Psoas muscle (tissue), 8 donors: ENCODE measurements at regions of chr14 and their contacts with region 1.

Region 1: DNA sequence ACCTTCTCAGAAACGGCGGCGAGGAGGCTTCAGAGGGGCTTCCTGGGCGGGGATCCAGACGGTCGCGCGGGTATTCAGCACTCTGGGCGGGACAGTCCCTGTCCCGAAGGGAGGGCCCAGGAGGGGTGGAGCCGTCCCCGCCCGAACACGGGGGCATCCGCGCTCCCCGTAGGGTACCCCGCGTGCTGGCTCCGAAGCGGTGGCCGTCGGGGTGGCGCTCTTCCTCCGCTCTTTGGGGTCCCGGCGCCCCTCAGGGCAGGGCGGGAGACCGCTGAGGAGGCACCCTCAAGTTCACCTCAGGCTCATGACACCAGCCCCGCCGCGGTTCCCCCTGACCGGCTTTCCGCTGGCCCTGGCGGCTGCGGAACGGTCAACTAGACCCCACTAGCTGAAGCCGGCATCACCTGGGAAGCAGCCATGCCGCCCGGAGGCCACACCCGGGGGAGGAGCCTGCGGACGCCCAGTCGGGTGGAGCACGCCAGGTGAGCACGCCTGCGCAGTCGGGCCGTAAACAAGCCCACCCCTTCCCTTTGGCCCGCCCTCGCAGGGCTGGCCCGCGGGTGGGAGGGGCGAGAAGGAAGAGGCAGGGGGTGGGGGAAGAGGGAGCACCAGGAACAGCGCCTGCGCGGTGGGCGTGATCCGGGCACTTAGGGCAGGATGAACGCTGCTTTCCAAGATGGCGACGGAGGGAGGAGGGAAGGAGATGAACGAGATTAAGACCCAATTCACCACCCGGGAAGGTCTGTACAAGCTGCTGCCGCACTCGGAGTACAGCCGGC is at the start of gene WDR20:
- DNase-seq: peak; percentile 98 to 99
- ATAC-seq: peak; percentile 99 to 100 (median 99)
- H3K4me3 ChIP-seq: peak within 1 kb of the TSS; percentile 86
- H3K27ac ChIP-seq: peak within 1 kb of the TSS; percentile 87
- H3K4me1 ChIP-seq: peaks cover 13% of the 10 kb centered on the region
- H3K27me3 ChIP-seq: no peaks in the 10 kb centered on the region
- CTCF ChIP-seq: no peak
- total RNA-seq, gene WDR20: 18.3 to 26.8 (median 22.3) TPM

Region 2: GRCh38 chr14:101903111-101903561 is 236.3 kb before region 1 on chr14:
- intact Hi-C with region 1: no loop called
- DNase-seq: peak; percentile 53 to 88
- ATAC-seq: peak; percentile 93 to 99 (median 98)
- H3K4me3 ChIP-seq: peak overlapping the region; percentile 29
- H3K27ac ChIP-seq: peak overlapping the region; percentile 58
- H3K4me1 ChIP-seq: peaks cover 10% of the 10 kb centered on the region
- H3K27me3 ChIP-seq: no peaks in the 10 kb centered on the region
- CTCF ChIP-seq: no peak

Region 3: DNA sequence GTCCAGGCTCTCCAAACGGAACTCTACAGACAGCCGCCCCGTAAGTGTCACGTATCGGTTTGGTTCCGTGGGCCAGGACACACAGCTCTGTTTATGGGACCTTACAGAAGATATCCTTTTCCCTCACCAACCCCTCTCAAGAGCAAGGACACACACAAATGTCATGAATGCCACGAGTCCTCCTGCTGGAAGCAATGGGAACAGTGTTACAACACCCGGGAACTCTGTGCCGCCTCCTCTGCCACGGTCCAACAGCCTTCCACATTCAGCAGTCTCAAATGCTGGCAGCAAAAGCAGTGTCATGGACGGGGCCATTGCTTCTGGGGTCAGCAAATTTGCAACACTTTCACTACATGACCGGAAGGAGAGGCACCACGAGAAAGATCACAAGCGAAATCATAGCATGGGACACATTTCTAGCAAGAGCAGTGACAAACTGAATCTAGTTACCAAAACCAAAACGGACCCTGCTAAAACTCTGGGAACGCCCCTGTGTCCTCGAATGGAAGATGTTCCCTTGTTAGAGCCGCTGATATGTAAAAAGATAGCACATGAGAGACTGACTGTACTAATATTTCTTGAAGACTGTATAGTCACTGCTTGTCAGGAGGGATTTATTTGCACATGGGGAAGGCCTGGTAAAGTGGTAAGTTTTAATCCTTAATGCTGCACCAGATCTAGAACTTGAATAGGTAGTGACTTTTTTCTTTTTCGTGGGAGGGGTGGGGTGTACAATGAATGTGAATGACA is 70.0 kb after region 1 on chr14:
- intact Hi-C with region 1: loop called in 1 of 2 experiments (anchors 5 kb)
- DNase-seq: peak in 1 of 2 donors; percentile 79
- ATAC-seq: peak; percentile 90 to 94 (median 92)
- H3K4me3 ChIP-seq: no peak overlapping the region
- H3K27ac ChIP-seq: peak overlapping the region; percentile 64
- H3K4me1 ChIP-seq: peaks cover 14% of the 10 kb centered on the region
- H3K27me3 ChIP-seq: no peaks in the 10 kb centered on the region
- CTCF ChIP-seq: peak; percentile 52

Region 4: GRCh38 chr14:102262929-102263462 is 123.6 kb after region 1 on chr14:
- intact Hi-C with region 1: no loop called
- DNase-seq: no peak
- ATAC-seq: no peak
- H3K4me3 ChIP-seq: no peak overlapping the region
- H3K27ac ChIP-seq: no peak overlapping the region
- H3K4me1 ChIP-seq: no peaks in the 10 kb centered on the region
- H3K27me3 ChIP-seq: no peaks in the 10 kb centered on the region
- CTCF ChIP-seq: no peak